ENCODE measurements at regions of chr6 and their contacts with region 1.

Region 1: GRCh38 chr6:107731422-107732319 is 92.4 kb downstream of the SCML4 start:
- DNase-seq: peak; percentile 47
- H3K4me3 Mint-ChIP-seq: peak overlapping the region; percentile 75
- H3K27ac Mint-ChIP-seq: peak overlapping the region; percentile 74
- H3K4me1 Mint-ChIP-seq: peaks cover 83% of the 10 kb centered on the region
- H3K27me3 Mint-ChIP-seq: no peaks in the 10 kb centered on the region

Region 2: DNA sequence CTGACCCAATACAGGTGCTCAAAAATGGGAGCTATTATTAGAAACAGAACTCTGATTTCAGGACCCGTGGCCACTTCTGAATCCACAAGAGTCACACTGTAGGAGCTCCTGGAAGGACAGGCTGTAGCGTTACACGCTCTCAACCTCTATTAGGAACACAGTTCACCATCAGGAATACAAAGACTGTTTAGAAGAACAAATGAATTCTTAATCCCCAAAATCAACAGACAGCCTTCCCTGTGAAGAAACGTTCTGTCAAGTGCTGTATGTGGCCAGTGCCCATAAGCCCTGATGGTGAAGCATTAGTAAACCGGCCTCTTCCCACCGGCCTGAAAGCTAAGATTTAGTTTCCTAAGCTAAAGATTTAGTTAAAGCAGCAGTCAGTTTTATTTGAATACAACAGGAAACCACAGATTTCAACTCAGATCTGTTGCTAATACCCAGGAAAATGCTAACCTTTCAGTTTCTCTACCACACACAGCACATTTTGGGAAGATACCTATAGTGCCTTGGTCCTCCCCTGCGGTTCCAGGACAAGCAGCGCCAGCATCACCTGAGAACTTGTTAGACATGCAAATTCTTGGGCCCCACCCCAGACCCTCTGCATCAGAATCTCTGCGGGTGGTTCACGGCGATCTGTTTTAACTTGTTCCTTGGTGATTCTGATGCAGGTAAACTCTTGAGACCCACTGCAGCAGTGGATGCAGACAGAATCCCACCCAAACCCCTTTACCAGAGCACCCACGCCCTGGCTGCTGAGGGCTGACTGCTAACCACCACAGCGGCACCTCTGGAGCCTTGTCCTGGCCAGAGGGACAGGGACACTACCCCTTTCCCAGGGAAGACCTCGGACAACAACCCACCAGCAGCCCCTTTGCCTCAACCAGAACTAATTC is 670.3 kb before region 1 on chr6:
- CTCF ChIA-PET with region 1: no interaction called
- POLR2A ChIA-PET with region 1: no interaction called
- intact Hi-C with region 1: no loop called
- DNase-seq: peak; percentile 47
- H3K4me3 Mint-ChIP-seq: no peak overlapping the region
- H3K27ac Mint-ChIP-seq: no peak overlapping the region
- H3K4me1 Mint-ChIP-seq: peaks cover 35% of the 10 kb centered on the region
- H3K27me3 Mint-ChIP-seq: no peaks in the 10 kb centered on the region

Region 3: GRCh38 chr6:107786709-107787588 is 55.3 kb after region 1 on chr6:
- CTCF ChIA-PET with region 1: interaction called, 9 read pairs
- POLR2A ChIA-PET with region 1: no interaction called
- intact Hi-C with region 1: loop called (anchors 2 kb)
- DNase-seq: peak; percentile 51
- H3K4me3 Mint-ChIP-seq: peak overlapping the region; percentile 40
- H3K27ac Mint-ChIP-seq: peak overlapping the region; percentile 28
- H3K4me1 Mint-ChIP-seq: peaks cover 74% of the 10 kb centered on the region
- H3K27me3 Mint-ChIP-seq: no peaks in the 10 kb centered on the region

Region 4: DNA sequence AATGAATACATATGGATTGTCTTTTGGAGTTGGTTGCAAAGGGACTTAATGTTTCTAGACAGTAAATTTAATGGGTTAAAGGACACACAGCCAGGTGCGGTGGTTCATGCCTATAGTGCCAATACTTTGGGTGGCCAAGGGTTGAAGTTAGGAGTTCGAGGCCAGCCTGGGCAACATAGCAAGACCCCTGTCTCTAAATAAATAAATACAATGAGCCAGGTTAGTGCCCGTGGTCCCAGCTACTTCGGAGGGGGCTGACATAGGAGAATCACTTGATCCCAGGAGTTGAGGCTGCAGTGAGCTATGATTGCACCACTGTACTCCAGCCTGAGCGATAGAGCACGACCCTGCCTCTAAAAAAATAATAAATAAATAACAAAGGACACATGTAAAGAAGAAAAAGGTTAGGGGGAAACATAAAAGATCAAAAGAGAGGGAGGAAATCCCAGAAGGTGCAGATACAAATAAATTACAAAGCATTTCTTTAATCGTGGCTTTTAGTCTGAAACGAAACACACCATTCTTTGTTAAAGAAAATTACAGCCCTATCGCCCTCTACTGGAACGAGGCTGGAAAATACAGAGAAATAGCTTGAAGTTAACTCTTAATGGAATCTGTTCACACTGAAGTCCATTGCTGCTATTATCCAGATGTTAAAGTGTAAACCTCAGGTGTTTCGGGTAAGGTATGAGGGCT is 135.1 kb after region 1 on chr6:
- CTCF ChIA-PET with region 1: interaction called, 19 read pairs
- POLR2A ChIA-PET with region 1: interaction called, 3 read pairs
- intact Hi-C with region 1: loop called (anchors 1 kb)
- DNase-seq: no peak
- H3K4me3 Mint-ChIP-seq: no peak overlapping the region
- H3K27ac Mint-ChIP-seq: no peak overlapping the region
- H3K4me1 Mint-ChIP-seq: peaks cover 13% of the 10 kb centered on the region
- H3K27me3 Mint-ChIP-seq: no peaks in the 10 kb centered on the region

Measured in activated CD4-positive, alpha-beta memory T cell treated with anti-CD3 and anti-CD28 coated beads for 36 hours (primary cell).